ENCODE measurements at regions of chr12 and their contacts with region 1.

Region 1: DNA sequence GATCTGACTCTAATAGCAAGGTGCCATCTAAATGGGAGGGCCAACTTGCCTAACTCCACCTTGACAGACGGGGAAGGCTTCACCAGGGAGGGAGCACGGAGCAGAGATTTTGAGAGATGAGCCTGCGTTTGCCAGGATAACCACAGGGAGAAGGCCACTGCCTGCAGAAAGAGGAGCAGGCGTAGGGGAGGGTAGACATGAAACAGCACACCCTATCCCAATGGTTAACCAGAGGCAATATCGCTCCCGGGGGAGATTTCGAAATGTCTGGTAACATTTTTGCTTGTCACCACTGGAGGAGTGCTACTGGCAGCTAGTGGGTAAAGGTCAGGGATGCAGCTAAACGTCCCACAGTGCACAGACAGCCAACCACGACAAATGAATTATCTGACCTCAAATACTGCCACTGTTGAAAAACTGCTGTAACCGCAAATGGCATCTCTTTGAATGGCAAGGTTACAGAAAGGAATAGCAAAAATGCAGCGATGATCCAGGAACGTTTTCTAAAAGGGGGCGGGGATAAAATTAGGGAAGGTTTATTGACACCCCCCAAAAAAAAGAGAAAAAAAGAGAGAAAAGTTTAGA is 126.0 kb upstream of the ATF7IP start:
- DNase-seq: peak in 2 of 3 donors; percentile 48 to 64
- ATAC-seq: peak; percentile 93
- H3K4me3 ChIP-seq: no peak overlapping the region
- H3K27ac ChIP-seq: peak overlapping the region; percentile 90
- H3K4me1 ChIP-seq: peaks cover 5% of the 10 kb centered on the region
- H3K27me3 ChIP-seq: no peaks in the 10 kb centered on the region

Region 2: DNA sequence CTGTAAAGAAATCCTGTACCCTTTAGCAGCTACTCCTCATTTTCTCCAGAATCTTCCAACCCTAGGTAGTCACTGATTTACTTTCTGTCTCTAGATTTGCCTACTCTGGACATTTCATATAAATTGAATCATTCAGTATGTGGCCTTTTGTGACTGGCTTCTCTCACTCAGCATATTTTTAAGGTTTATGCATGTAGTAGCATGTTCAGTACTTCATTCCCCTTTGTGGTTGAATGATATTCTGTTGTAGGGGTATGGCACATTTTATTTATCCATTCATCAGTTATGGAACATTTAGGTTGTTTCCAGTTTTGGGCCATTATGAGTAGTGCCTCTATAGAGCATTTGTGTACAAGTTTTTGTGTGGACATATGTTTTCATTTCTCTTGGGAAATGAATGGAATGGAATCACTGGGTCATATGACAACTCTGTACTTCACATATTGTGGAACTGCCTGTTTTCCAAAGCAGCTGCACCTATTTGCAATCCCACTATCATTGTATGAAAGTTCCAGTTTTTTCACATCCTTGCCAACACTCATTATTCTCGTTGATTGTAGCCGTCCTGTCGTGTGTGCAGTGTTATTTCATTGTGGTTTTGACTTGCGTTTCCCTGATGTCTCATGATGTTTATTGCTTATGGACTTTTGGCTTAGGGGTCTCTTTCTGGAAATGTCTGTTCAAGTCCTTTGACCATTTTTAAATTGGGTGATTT is 183.2 kb after region 1 on chr12:
- intact Hi-C with region 1: loop called in 1 of 4 experiments (anchors 10 kb)
- DNase-seq: no peak
- ATAC-seq: no peak
- H3K4me3 ChIP-seq: no peak overlapping the region
- H3K27ac ChIP-seq: no peak overlapping the region
- H3K4me1 ChIP-seq: peaks cover 4% of the 10 kb centered on the region
- H3K27me3 ChIP-seq: no peaks in the 10 kb centered on the region

Region 3: GRCh38 chr12:14618983-14619382 is 379.5 kb after region 1 on chr12:
- intact Hi-C with region 1: loop called in 2 of 4 experiments (anchors 5 kb)
- DNase-seq: no peak
- ATAC-seq: no peak
- H3K4me3 ChIP-seq: no peak overlapping the region
- H3K27ac ChIP-seq: no peak overlapping the region
- H3K4me1 ChIP-seq: peaks cover under 1% of the 10 kb centered on the region
- H3K27me3 ChIP-seq: no peaks in the 10 kb centered on the region

Region 4: GRCh38 chr12:14664510-14664909 is 425.1 kb after region 1 on chr12:
- intact Hi-C with region 1: loop called in 1 of 4 experiments (anchors 10 kb)
- DNase-seq: no peak
- ATAC-seq: peak; percentile 51 to 62
- H3K4me3 ChIP-seq: no peak overlapping the region
- H3K27ac ChIP-seq: no peak overlapping the region
- H3K4me1 ChIP-seq: no peaks in the 10 kb centered on the region
- H3K27me3 ChIP-seq: no peaks in the 10 kb centered on the region

Region 5: DNA sequence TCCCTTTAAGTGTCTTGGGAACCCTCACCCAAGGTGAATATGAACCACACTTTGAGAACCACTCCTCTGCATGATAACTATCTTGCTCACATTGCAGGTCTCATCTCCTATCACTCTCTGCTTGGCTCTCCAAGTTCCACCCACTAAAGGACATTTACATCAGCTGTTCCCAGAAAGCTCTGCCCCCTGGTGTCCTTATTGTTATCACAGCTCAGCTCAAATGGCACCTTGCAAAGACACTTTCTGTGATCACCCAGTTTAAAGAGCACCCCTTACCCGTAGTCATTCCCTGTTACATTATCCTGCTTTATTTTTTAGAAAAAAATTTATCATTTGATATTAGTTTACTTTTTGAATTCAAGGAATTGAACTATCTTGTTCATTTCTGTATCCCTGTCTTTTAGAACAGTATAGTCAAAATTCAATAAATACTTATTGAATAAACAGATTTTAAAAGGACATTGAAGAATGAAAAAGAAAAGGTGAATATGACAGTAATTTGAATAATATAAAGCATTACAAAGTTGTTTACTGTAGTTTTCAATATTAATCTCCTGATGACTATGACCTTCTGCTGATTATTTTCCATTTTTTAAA is 477.5 kb after region 1 on chr12:
- intact Hi-C with region 1: loop called in 1 of 4 experiments (anchors 10 kb)
- DNase-seq: no peak
- ATAC-seq: peak in 1 of 2 donors; percentile 38
- H3K4me3 ChIP-seq: no peak overlapping the region
- H3K27ac ChIP-seq: no peak overlapping the region
- H3K4me1 ChIP-seq: no peaks in the 10 kb centered on the region
- H3K27me3 ChIP-seq: no peaks in the 10 kb centered on the region

Measured in right cardiac atrium (tissue), 5 donors.